ENCODE measurements at regions of chr2 and their contacts with region 1.

Region 1: GRCh38 chr2:61538200-61538919 is at the start of gene XPO1:
- DNase-seq: peak; percentile 99
- H3K4me3 Mint-ChIP-seq: peak within 1 kb of the TSS; percentile 99
- H3K27ac Mint-ChIP-seq: peak within 1 kb of the TSS; percentile 100
- H3K4me1 Mint-ChIP-seq: peaks cover 23% of the 10 kb centered on the region
- H3K27me3 Mint-ChIP-seq: no peaks in the 10 kb centered on the region
- total RNA-seq, gene XPO1: 218 and 221 TPM in 2 replicates

Region 2: GRCh38 chr2:61065715-61066709 is 472.3 kb before region 1 on chr2 and contains the start of gene SANBR:
- intact Hi-C with region 1: loop called (anchors 2 kb)
- DNase-seq: peak; percentile 84
- H3K4me3 Mint-ChIP-seq: peak within 1 kb of the TSS; percentile 94
- H3K27ac Mint-ChIP-seq: peak within 1 kb of the TSS; percentile 85
- H3K4me1 Mint-ChIP-seq: peaks cover 12% of the 10 kb centered on the region
- H3K27me3 Mint-ChIP-seq: no peaks in the 10 kb centered on the region
- total RNA-seq, gene SANBR: 8.2 and 9.4 TPM in 2 replicates

Region 3: GRCh38 chr2:61426267-61426897 is 112.0 kb before region 1 on chr2:
- intact Hi-C with region 1: loop called (anchors 5 kb)
- DNase-seq: peak; percentile 57
- H3K4me3 Mint-ChIP-seq: no peak overlapping the region
- H3K27ac Mint-ChIP-seq: no peak overlapping the region
- H3K4me1 Mint-ChIP-seq: peaks cover 42% of the 10 kb centered on the region
- H3K27me3 Mint-ChIP-seq: no peaks in the 10 kb centered on the region

Region 4: GRCh38 chr2:61575447-61575859 is 37.1 kb after region 1 on chr2:
- intact Hi-C with region 1: no loop called
- DNase-seq: no peak
- H3K4me3 Mint-ChIP-seq: no peak overlapping the region
- H3K27ac Mint-ChIP-seq: peak overlapping the region; percentile 64
- H3K4me1 Mint-ChIP-seq: peaks cover 8% of the 10 kb centered on the region
- H3K27me3 Mint-ChIP-seq: no peaks in the 10 kb centered on the region

Region 5: GRCh38 chr2:61694312-61695274 is 156.2 kb after region 1 on chr2:
- intact Hi-C with region 1: loop called (anchors 5 kb)
- DNase-seq: peak; percentile 79
- H3K4me3 Mint-ChIP-seq: peak overlapping the region; percentile 93
- H3K27ac Mint-ChIP-seq: peak overlapping the region; percentile 81
- H3K4me1 Mint-ChIP-seq: peaks cover 12% of the 10 kb centered on the region
- H3K27me3 Mint-ChIP-seq: no peaks in the 10 kb centered on the region

Region 6: GRCh38 chr2:61888267-61889055 is 350.1 kb after region 1 on chr2 and contains the start of gene CCT4:
- intact Hi-C with region 1: loop called (anchors 2 kb)
- DNase-seq: peak; percentile 88
- H3K4me3 Mint-ChIP-seq: peak within 1 kb of the TSS; percentile 96
- H3K27ac Mint-ChIP-seq: peak within 1 kb of the TSS; percentile 99
- H3K4me1 Mint-ChIP-seq: peaks cover 20% of the 10 kb centered on the region
- H3K27me3 Mint-ChIP-seq: no peaks in the 10 kb centered on the region
- total RNA-seq, gene CCT4: 360 and 367 TPM in 2 replicates

Measured in activated T-helper 2 cell treated with anti-CD3 and anti-CD28 coated beads, Interferon-gamma antibody, Interleukin-2, Interleukin-4, amounts not matched to agents 10 μg/mL and 5 μg/mL and 100 μg/mL, durations not matched to agents 14 hours and 24 hours and 36 hours (primary cell).